B cell (primary cell): ENCODE measurements at regions of chr6 and their contacts with region 1.

Region 1: DNA sequence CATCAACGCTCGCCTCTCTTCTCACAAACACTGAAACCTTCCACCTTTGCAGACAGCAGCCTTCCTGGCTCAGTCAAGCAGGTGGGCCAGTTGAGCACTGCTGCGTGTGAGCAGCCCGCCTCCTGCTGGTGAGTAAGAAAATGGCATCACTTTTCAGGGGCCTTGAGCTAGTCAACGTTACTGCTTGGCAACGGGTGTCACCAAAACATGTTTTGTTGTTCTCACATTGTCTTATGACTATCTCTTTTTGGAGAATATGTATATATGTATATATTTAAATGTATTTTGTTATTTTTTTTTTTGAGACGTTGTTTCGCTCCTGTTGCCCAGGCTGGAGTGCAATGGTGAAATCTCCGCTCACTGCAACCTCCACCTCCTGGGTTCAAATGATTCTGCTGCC is 97.0 kb upstream of the AGPAT4 start:
- DNase-seq: peak; percentile 72
- ATAC-seq: peak; percentile 64
- H3K4me3 ChIP-seq: no peak overlapping the region
- H3K4me3 Mint-ChIP-seq: no peak overlapping the region
- H3K27ac ChIP-seq: no peak overlapping the region
- H3K27ac Mint-ChIP-seq: no peak overlapping the region
- H3K4me1 ChIP-seq: no peaks in the 10 kb centered on the region
- H3K4me1 Mint-ChIP-seq: no peaks in the 10 kb centered on the region
- H3K27me3 ChIP-seq: no peaks in the 10 kb centered on the region
- H3K27me3 Mint-ChIP-seq: peaks cover 3% of the 10 kb centered on the region
- CTCF ChIP-seq: peak; percentile 95

Region 2: DNA sequence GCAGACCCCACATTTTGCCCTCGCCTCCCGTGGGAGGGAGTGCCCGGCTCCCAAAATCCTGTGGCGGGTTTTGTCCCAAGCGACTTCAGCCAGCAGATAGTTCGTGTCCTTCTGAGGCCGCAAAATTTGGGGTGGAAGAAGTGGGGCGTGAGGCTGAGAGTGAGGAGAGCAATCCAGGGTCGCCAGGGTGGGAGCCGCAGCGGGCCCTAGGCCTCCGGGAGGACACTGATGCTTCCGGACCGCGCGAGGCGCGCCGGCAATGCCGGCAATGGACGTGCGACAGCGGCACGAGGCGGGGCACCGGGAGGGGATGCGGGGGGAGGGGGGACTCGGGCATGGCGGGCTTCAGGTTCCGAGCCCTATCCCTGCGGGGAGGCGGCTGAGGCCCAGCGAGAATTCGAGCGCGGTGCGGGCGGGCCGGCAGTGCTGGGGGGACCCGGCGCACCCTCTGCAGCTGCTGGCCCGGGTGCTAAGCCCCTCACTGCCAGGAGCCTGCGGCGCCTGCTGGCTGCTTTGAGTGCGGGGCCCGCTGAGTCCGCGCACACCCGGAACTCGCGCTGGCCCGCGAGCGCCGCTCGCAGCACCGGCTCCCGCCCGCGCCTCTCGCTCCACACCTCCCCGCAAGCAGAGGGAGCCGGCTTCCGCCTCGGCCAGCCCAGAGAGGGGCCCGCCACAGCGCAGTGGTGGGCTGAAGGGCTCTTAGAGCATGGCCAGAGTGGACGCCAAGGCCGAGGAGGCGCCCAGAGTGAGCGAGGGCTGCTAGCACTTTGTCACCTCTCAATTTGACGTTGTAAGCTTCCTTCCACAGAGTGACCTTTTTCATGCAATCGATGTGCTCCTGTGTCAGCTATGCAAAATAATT is 850.6 kb before region 1 on chr6:
- CTCF ChIA-PET with region 1: interaction called, 17 read pairs
- POLR2A ChIA-PET with region 1: no interaction called
- intact Hi-C with region 1: no loop called
- DNase-seq: peak; percentile 83
- ATAC-seq: peak; percentile 83
- H3K4me3 ChIP-seq: peak overlapping the region in 4 of 5 experiments; percentile 56 to 81 (median 70)
- H3K4me3 Mint-ChIP-seq: peak overlapping the region; percentile 95
- H3K27ac ChIP-seq: peak overlapping the region in 1 of 2 donors; percentile 61
- H3K27ac Mint-ChIP-seq: peak overlapping the region; percentile 74
- H3K4me1 ChIP-seq: peaks cover 5% of the 10 kb centered on the region in 2 donors
- H3K4me1 Mint-ChIP-seq: peaks cover 10% of the 10 kb centered on the region
- H3K27me3 ChIP-seq: no peaks in the 10 kb centered on the region
- H3K27me3 Mint-ChIP-seq: peaks cover 21% of the 10 kb centered on the region
- CTCF ChIP-seq: peak; percentile 27

Region 3: GRCh38 chr6:160750276-160750689 is 620.6 kb before region 1 on chr6:
- CTCF ChIA-PET with region 1: interaction called, 4 read pairs
- POLR2A ChIA-PET with region 1: no interaction called
- intact Hi-C with region 1: loop called (anchors 2 kb)
- DNase-seq: peak; percentile 16
- ATAC-seq: no peak
- H3K4me3 ChIP-seq: no peak overlapping the region
- H3K4me3 Mint-ChIP-seq: no peak overlapping the region
- H3K27ac ChIP-seq: no peak overlapping the region
- H3K27ac Mint-ChIP-seq: no peak overlapping the region
- H3K4me1 ChIP-seq: no peaks in the 10 kb centered on the region
- H3K4me1 Mint-ChIP-seq: no peaks in the 10 kb centered on the region
- H3K27me3 ChIP-seq: peaks cover 0 to 2% (median 0%) of the 10 kb centered on the region in 4 experiments
- H3K27me3 Mint-ChIP-seq: peaks cover 23% of the 10 kb centered on the region
- CTCF ChIP-seq: peak; percentile 28

Region 4: GRCh38 chr6:161101517-161101916 is 269.4 kb before region 1 on chr6:
- CTCF ChIA-PET with region 1: interaction called, 19 read pairs
- POLR2A ChIA-PET with region 1: no interaction called
- intact Hi-C with region 1: loop called (anchors 1 kb)
- DNase-seq: peak; percentile 9
- ATAC-seq: no peak
- H3K4me3 ChIP-seq: no peak overlapping the region
- H3K4me3 Mint-ChIP-seq: no peak overlapping the region
- H3K27ac ChIP-seq: no peak overlapping the region
- H3K27ac Mint-ChIP-seq: no peak overlapping the region
- H3K4me1 ChIP-seq: no peaks in the 10 kb centered on the region
- H3K4me1 Mint-ChIP-seq: no peaks in the 10 kb centered on the region
- H3K27me3 ChIP-seq: no peaks in the 10 kb centered on the region
- H3K27me3 Mint-ChIP-seq: no peaks in the 10 kb centered on the region
- CTCF ChIP-seq: peak; percentile 25

Region 5: GRCh38 chr6:161353208-161353613 is 17.7 kb before region 1 on chr6:
- CTCF ChIA-PET with region 1: interaction called, 13 read pairs
- POLR2A ChIA-PET with region 1: no interaction called
- intact Hi-C with region 1: no loop called
- DNase-seq: no peak
- ATAC-seq: no peak
- H3K4me3 ChIP-seq: no peak overlapping the region
- H3K4me3 Mint-ChIP-seq: no peak overlapping the region
- H3K27ac ChIP-seq: no peak overlapping the region
- H3K27ac Mint-ChIP-seq: no peak overlapping the region
- H3K4me1 ChIP-seq: no peaks in the 10 kb centered on the region
- H3K4me1 Mint-ChIP-seq: peaks cover 6% of the 10 kb centered on the region
- H3K27me3 ChIP-seq: no peaks in the 10 kb centered on the region
- H3K27me3 Mint-ChIP-seq: no peaks in the 10 kb centered on the region
- CTCF ChIP-seq: no peak